CD8-positive, alpha-beta T cell (primary cell): ENCODE measurements at regions of chr6 and their contacts with region 1.

Region 1: GRCh38 chr6:41413250-41413649 is 77.8 kb downstream of the NCR2 start:
- DNase-seq: no peak
- ATAC-seq: no peak
- H3K4me3 ChIP-seq: no peak overlapping the region
- H3K4me3 Mint-ChIP-seq: no peak overlapping the region
- H3K27ac ChIP-seq: no peak overlapping the region
- H3K27ac Mint-ChIP-seq: no peak overlapping the region
- H3K4me1 ChIP-seq: peaks cover 5% of the 10 kb centered on the region
- H3K4me1 Mint-ChIP-seq: peaks cover 9% of the 10 kb centered on the region
- H3K27me3 ChIP-seq: peaks cover 5 to 7% of the 10 kb centered on the region in 2 experiments
- H3K27me3 Mint-ChIP-seq: peaks cover 35% of the 10 kb centered on the region
- CTCF ChIP-seq: no peak

Region 2: DNA sequence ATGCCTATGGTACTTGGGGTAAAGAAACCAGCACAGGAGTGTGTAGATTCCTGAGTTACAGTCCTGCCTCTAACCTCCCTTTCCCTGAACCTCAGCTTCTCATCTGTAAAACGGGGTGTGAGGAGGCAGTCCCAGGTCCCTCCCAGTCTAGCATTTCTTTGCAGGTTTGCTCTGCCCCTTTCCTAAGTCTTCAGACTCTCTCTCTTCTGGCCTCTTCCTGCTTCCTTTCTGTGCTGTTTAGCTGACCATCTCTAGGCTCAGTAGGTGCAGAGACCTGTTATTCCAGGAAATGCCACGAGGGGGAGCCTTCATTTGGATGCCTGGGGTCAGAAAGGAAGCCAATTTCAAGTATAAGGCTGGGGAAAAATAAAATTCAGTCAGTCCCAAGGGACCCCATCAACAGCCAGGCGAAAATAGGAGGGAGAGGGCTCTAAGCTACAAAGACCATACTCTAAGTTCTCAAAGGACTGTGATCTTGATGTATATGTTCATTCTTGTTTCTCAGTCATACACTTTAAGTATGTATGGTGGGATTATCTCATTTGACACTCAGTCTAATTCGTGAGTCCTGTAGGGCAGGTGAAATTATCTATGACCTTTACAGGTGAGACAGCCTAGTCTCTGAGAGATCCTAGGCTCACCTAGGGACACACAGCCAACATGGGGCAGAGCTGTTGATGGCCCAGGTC is 11.3 kb after region 1 on chr6:
- CTCF ChIA-PET with region 1: interaction called, 14 read pairs
- POLR2A ChIA-PET with region 1: no interaction called
- intact Hi-C with region 1: no loop called
- DNase-seq: peak; percentile 67 to 89 (median 78)
- ATAC-seq: peak; percentile 62
- H3K4me3 ChIP-seq: no peak overlapping the region
- H3K4me3 Mint-ChIP-seq: no peak overlapping the region
- H3K27ac ChIP-seq: no peak overlapping the region
- H3K27ac Mint-ChIP-seq: no peak overlapping the region
- H3K4me1 ChIP-seq: peaks cover 32% of the 10 kb centered on the region
- H3K4me1 Mint-ChIP-seq: peaks cover 9% of the 10 kb centered on the region
- H3K27me3 ChIP-seq: peaks cover 16 to 28% of the 10 kb centered on the region in 2 experiments
- H3K27me3 Mint-ChIP-seq: peaks cover 21% of the 10 kb centered on the region
- CTCF ChIP-seq: peak; percentile 91

Region 3: DNA sequence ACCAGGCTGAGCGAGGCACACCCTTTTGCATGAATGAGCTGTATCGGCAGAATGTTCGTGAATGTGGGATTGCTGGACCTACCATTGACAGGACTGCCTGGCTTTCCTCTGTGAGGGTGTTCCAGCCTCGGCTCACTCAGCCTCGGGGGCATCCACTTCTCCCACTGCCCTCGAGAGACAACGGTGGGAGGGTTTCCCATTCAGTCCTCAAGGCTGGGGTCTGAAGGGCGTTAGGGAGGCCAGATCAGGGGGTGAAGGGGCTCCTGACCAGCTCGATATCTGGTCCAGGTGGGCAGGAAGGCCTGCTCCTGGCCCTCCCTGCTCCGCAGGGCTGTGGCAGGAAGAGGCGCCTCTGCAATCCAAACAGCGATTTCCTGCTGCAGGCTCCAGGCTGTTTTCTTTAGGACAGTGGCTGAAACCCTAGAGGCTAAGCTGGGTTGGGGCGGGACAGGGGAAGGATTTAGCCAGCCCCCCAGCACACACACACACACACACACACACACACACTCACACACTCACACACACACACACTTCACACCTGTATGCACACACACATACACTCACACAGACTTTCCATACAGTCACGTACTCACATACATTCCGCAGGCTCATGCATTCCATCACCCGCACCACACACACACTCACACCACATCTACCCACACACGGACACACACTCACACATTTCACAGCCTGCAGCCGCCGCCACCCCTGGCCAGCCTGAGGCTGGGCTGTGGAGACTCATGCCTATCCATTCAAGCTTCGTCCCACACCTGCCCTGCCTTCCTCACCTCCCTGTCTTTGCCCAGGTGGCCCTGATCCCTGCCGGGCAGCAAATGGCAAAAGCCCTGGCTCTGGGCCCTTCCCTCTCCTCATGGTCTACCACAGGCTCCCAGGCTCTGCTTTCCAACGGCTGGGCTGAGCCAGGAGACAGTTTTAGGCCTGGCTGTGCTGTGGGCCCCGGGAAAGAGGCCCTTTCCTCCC is 242.8 kb after region 1 on chr6:
- CTCF ChIA-PET with region 1: no interaction called
- POLR2A ChIA-PET with region 1: no interaction called
- intact Hi-C with region 1: no loop called
- DNase-seq: no peak
- ATAC-seq: no peak
- H3K4me3 ChIP-seq: no peak overlapping the region
- H3K4me3 Mint-ChIP-seq: no peak overlapping the region
- H3K27ac ChIP-seq: no peak overlapping the region
- H3K27ac Mint-ChIP-seq: no peak overlapping the region
- H3K4me1 ChIP-seq: no peaks in the 10 kb centered on the region
- H3K4me1 Mint-ChIP-seq: no peaks in the 10 kb centered on the region
- H3K27me3 ChIP-seq: no peaks in the 10 kb centered on the region
- H3K27me3 Mint-ChIP-seq: peaks cover 32% of the 10 kb centered on the region
- CTCF ChIP-seq: no peak